ENCODE measurements at regions of chr11 and their contacts with region 1.

Region 1: GRCh38 chr11:9565822-9566560 is 7.5 kb upstream of the WEE1 start:
- DNase-seq: peak; percentile 80
- H3K4me3 Mint-ChIP-seq: peak overlapping the region; percentile 36
- H3K27ac Mint-ChIP-seq: peak overlapping the region; percentile 82
- H3K4me1 Mint-ChIP-seq: peaks cover 37% of the 10 kb centered on the region
- H3K27me3 Mint-ChIP-seq: no peaks in the 10 kb centered on the region

Region 2: GRCh38 chr11:8688414-8689362 is 877.3 kb before region 1 on chr11:
- CTCF ChIA-PET with region 1: no interaction called
- POLR2A ChIA-PET with region 1: no interaction called
- intact Hi-C with region 1: loop called (anchors 10 kb)
- DNase-seq: peak; percentile 94
- H3K4me3 Mint-ChIP-seq: peak overlapping the region; percentile 97
- H3K27ac Mint-ChIP-seq: peak overlapping the region; percentile 88
- H3K4me1 Mint-ChIP-seq: peaks cover 57% of the 10 kb centered on the region
- H3K27me3 Mint-ChIP-seq: no peaks in the 10 kb centered on the region

Region 3: DNA sequence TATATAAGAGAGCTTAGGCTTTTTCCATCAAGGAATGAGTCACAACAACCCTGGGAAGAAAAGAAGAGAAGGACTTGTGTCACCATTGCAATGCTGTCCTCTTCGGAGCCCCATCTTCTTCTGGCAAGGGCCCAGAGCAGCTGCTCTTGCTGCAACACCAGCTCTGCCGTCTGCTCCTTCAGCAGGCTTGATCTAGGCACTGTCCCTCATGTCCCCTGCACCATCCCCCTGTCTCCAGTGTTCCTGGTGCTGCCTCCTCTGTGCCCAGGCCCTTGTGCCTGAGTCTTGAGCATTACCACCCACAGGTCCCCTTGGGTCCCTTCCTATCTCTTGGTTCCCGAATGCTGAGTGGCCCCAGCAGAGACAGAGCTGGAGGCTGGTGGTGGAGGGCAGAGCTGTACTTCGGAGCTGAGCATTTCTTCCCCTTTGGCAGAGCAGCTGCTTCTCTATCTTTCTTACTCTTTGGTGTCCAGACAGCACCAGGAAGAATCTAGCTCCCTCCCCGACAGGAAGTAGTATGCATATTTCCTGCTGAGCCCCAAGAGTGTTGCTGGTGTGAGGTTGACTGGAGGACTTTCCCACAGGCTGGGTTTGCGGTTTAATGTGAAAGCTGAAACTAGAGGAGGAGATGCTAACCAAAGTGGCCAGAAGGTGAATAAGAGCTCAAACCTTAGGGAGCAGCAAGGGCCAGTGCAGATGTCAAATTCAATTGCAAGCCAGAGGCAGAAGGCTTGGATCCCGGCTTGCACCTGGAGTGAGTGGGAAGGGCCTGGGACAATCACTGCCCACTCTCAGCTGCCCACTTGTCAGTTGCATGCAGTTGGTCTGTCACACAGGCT is 35.3 kb after region 1 on chr11:
- CTCF ChIA-PET with region 1: no interaction called
- POLR2A ChIA-PET with region 1: no interaction called
- intact Hi-C with region 1: loop called (anchors 2 kb)
- DNase-seq: peak; percentile 87
- H3K4me3 Mint-ChIP-seq: peak overlapping the region; percentile 68
- H3K27ac Mint-ChIP-seq: peak overlapping the region; percentile 84
- H3K4me1 Mint-ChIP-seq: peaks cover 24% of the 10 kb centered on the region
- H3K27me3 Mint-ChIP-seq: no peaks in the 10 kb centered on the region

Measured in activated CD4-positive, alpha-beta memory T cell treated with anti-CD3 and anti-CD28 coated beads for 36 hours (primary cell).